ENCODE measurements at regions of chr2 and their contacts with region 1.

Region 1: DNA sequence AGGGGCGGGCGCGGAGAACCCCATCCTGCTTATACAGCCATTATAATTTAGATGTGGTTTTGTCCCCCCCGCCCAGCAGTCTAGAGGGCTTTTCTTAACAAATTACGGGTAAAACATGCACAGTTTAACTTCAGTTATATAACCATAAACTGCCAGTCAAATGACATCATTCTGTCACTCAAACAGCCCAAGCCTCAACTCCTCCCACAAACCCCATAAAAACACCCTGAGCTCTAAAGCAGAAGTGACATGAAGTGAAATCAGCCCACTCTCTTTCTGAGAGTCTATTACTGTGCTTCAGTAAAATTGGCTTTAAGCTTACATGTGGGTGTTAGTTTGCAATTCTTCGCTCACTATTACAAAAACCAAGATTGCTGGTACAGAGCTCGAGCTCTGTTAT is 705.1 kb upstream of the GCFC2 start:
- DNase-seq: no peak
- H3K4me3 ChIP-seq: no peak overlapping the region
- CTCF ChIP-seq: no peak

Region 2: GRCh38 chr2:76461431-76461830 is 45.6 kb after region 1 on chr2:
- in situ Hi-C with region 1: no loop called
- DNase-seq: no peak
- H3K4me3 ChIP-seq: no peak overlapping the region
- CTCF ChIP-seq: no peak

Region 3: DNA sequence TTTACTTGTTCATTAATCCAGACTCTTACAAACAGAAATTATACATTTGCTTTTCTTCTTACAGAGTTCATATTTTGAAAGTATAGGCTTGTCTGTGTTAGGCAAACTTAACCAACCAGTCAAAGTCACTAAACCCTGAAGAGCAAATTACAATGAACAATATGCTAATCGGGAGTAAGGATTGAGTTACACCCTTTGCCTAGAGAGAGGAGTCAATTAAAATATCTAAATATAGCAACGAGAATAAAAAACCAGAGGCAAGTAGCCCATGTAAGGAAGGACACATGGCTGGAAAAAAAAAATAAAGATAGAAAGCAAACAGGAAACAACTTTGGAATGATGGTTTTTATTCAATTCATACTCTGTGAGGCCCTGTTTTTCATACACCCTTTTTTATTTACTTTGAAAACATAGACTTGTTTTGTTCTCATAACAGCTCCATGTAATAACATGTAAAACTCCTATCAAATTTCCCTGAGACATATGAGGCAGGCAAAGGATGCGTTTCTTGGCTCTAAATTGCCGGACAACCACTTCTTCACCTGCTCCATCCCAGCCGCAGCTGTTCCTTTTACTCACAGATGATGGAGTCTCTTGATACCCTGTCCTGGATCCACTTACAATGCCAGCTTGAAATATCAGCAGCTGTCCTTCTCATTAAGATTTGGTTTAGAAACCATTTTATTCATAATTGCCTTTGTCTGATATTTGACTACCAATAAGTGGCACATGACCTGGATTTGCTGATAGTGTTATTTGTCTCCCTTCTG is 62.6 kb after region 1 on chr2:
- in situ Hi-C with region 1: loop called (anchors 10 kb)
- DNase-seq: no peak
- H3K4me3 ChIP-seq: no peak overlapping the region
- CTCF ChIP-seq: no peak

Measured in astrocyte of the cerebellum (primary cell).